ENCODE measurements at regions of chr1 and their contacts with region 1.

Region 1: GRCh38 chr1:68120136-68120791 is 69.8 kb upstream of the DIRAS3 start:
- DNase-seq: peak; percentile 65
- H3K4me3 ChIP-seq: no peak overlapping the region
- H3K27ac ChIP-seq: no peak overlapping the region
- H3K4me1 ChIP-seq: no peaks in the 10 kb centered on the region
- CTCF ChIP-seq: peak; percentile 91

Region 2: GRCh38 chr1:67766141-67766978 is 353.9 kb before region 1 on chr1:
- CTCF ChIA-PET with region 1: interaction called, 3 read pairs
- POLR2A ChIA-PET with region 1: no interaction called
- intact Hi-C with region 1: loop called (anchors 5 kb)
- DNase-seq: peak; percentile 61
- H3K4me3 ChIP-seq: no peak overlapping the region
- H3K27ac ChIP-seq: no peak overlapping the region
- H3K4me1 ChIP-seq: no peaks in the 10 kb centered on the region
- CTCF ChIP-seq: peak; percentile 92

Region 3: GRCh38 chr1:67855961-67856360 is 264.3 kb before region 1 on chr1:
- CTCF ChIA-PET with region 1: no interaction called
- POLR2A ChIA-PET with region 1: no interaction called
- intact Hi-C with region 1: no loop called
- DNase-seq: no peak
- H3K4me3 ChIP-seq: no peak overlapping the region
- H3K27ac ChIP-seq: no peak overlapping the region
- H3K4me1 ChIP-seq: no peaks in the 10 kb centered on the region
- CTCF ChIP-seq: no peak

Region 4: GRCh38 chr1:68221621-68222373 is 101.5 kb after region 1 on chr1:
- CTCF ChIA-PET with region 1: no interaction called
- POLR2A ChIA-PET with region 1: no interaction called
- intact Hi-C with region 1: loop called (anchors 5 kb)
- DNase-seq: no peak
- H3K4me3 ChIP-seq: no peak overlapping the region
- H3K27ac ChIP-seq: no peak overlapping the region
- H3K4me1 ChIP-seq: no peaks in the 10 kb centered on the region
- CTCF ChIP-seq: no peak

Region 5: DNA sequence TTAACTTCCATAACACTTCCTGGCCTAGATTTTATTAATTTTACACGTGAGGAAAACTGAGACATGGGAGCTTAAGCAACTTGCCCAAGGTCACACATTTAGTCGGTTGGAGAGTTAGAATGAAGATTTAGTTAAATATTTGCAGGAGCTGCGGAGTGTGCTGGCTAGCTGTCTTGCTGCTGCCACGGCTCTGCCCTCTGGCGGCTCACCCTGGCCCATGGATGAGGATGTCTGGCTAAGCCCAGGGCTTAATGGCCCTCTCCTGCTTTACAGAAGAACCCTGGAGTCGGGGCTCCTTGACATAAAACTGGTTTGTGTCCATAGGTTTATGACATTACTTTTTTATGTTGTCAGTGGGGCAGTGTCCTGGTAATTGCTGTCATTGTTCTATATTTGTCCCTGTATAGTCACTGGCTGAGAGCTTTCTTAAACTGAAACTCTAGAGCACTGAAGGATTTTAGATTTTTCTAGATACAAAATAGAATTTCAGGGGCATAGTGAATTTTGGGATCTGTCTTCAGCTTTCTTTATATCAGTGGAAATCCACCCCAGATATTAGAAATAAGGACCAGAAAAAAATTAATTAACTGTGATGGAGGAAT is 200.9 kb after region 1 on chr1:
- CTCF ChIA-PET with region 1: interaction called, 6 read pairs
- POLR2A ChIA-PET with region 1: no interaction called
- intact Hi-C with region 1: loop called (anchors 2 kb)
- DNase-seq: peak; percentile 4
- H3K4me3 ChIP-seq: no peak overlapping the region
- H3K27ac ChIP-seq: no peak overlapping the region
- H3K4me1 ChIP-seq: no peaks in the 10 kb centered on the region
- CTCF ChIP-seq: peak; percentile 37; the same call in 1 of the 2 replicates

Region 6: DNA sequence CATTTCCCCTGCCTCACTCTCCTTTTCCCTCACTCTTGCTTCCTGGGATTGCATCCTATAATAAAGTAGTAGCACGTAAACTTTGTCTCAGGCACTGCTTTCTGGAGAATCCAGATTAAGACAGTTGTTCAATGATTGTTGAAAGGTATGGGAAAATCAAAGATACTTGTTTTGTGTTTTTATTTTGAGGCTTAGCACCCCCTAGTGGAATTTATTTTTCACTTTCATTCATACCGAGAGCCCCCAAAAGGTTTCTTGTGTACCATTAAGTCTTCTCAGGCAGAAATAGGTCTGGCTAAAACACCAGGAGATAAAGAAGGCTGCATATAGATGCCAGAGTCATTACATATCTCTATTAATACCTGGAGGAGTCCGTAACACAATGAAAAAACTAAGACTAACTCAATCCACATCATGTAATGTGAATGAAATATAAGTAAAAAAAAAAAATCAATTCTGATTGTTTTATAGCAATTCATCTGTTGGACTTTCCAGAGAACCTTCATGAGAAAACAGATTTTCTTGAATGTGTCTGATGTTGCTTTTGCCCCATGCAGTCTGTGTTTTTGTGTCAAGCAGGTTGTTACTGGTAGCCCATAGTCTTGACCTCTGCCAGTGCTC is 226.0 kb after region 1 on chr1:
- CTCF ChIA-PET with region 1: interaction called, 10 read pairs
- POLR2A ChIA-PET with region 1: no interaction called
- intact Hi-C with region 1: loop called (anchors 1 kb)
- DNase-seq: peak; percentile 29
- H3K4me3 ChIP-seq: no peak overlapping the region
- H3K27ac ChIP-seq: no peak overlapping the region
- H3K4me1 ChIP-seq: no peaks in the 10 kb centered on the region
- CTCF ChIP-seq: peak; percentile 86

Region 7: DNA sequence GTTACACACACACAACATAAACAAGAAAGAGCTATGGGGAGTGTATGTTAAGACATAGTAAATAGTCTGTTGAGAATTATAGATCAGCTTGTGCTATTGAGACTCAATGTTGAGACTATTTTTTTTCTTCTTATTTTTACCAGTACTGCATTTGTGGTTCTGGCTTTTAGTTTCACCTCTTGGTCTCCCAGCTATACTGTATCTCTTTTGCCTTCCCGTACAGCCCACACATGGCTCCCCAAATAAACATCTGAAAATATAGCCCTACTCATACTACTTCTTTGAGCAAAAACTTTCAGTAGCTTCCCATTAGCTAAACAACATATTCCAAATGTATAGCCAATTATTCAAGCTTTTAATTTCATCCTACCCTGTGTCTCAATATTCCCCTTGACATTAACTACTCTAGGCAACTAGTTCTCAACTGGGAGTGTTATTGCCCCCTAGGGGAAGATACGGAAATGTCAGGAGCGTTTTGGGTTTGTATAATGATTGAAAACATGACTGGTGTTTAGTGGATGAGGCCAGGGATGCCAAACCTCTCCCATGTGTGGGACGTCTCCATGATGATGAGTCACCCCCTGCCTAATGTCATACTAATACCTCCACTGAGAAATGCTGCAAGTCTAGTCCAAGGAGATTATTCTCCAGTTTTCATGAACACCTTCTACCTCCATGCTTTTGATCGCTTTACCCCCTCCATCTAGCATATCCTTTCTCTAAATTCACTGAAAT is 322.7 kb after region 1 on chr1:
- CTCF ChIA-PET with region 1: interaction called, 6 read pairs
- POLR2A ChIA-PET with region 1: interaction called, 6 read pairs
- intact Hi-C with region 1: loop called (anchors 2 kb)
- DNase-seq: peak; percentile 32
- H3K4me3 ChIP-seq: no peak overlapping the region
- H3K27ac ChIP-seq: no peak overlapping the region
- H3K4me1 ChIP-seq: no peaks in the 10 kb centered on the region
- CTCF ChIP-seq: peak; percentile 83

Region 8: GRCh38 chr1:68571454-68572235 is 451.4 kb after region 1 on chr1:
- CTCF ChIA-PET with region 1: no interaction called
- POLR2A ChIA-PET with region 1: no interaction called
- intact Hi-C with region 1: no loop called
- DNase-seq: no peak
- H3K4me3 ChIP-seq: no peak overlapping the region
- H3K27ac ChIP-seq: no peak overlapping the region
- H3K4me1 ChIP-seq: no peaks in the 10 kb centered on the region
- CTCF ChIP-seq: no peak

Region 9: GRCh38 chr1:69737527-69738185 is 1617.4 kb after region 1 on chr1:
- CTCF ChIA-PET with region 1: no interaction called
- POLR2A ChIA-PET with region 1: no interaction called
- intact Hi-C with region 1: loop called (anchors 2 kb)
- DNase-seq: peak; percentile 61
- H3K4me3 ChIP-seq: no peak overlapping the region
- H3K27ac ChIP-seq: no peak overlapping the region
- H3K4me1 ChIP-seq: no peaks in the 10 kb centered on the region
- CTCF ChIP-seq: peak; percentile 89

Measured in OCI-LY7 (cell line).